ENCODE measurements at regions of chr3 and their contacts with region 1.

Region 1: GRCh38 chr3:98573181-98573728 is 20.2 kb downstream of the CPOX start:
- DNase-seq: peak in 4 of 5 donors; percentile 41 to 55 (median 50)
- H3K4me3 ChIP-seq: no peak overlapping the region
- H3K4me3 Mint-ChIP-seq: peak overlapping the region in 7 of 8 donors; percentile 7 to 70 (median 59)
- H3K27ac ChIP-seq: no peak overlapping the region
- H3K27ac Mint-ChIP-seq: peak overlapping the region; percentile 11 to 96 (median 88)
- H3K4me1 ChIP-seq: peaks cover 21% of the 10 kb centered on the region
- H3K4me1 Mint-ChIP-seq: peaks cover 22 to 47% (median 37%) of the 10 kb centered on the region in 4 donors
- H3K27me3 ChIP-seq: no peaks in the 10 kb centered on the region
- H3K27me3 Mint-ChIP-seq: no peaks in the 10 kb centered on the region

Region 2: DNA sequence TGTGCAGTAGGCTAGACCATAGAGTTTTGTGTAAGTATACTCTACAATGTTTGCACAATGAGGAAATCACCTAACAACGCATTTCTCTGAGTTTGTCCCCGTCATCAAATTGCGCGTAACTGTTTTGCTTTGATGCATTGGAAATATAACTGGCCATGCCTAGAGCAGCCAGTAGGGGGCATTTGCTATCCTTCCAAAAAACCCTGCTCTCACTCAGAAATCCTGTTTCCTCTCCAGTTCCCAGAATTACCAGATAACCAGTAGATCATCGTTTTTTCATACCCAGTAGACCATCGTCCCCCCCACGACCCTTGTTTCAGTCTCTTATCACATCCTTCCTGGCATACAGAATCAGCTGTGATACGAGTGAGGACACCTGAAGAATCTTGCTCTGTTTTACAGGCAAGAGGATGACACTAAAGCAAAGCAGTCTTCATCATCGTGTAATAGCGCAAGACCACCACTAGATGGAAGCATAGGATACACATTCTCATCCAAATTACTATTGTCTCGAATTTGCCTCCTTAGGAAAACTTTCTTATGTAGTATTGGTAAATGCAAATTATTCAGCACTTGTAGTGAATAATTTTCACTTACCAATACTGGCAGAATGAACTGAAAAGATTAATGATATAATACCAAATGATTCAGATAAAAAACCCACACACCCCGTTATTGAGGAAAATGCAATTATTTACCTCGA is 533.8 kb before region 1 on chr3:
- CTCF ChIA-PET with region 1: interaction called, 19 read pairs
- POLR2A ChIA-PET with region 1: no interaction called
- intact Hi-C with region 1: loop called (anchors 1 kb)
- DNase-seq: peak; percentile 84 to 90 (median 89)
- H3K4me3 ChIP-seq: peak overlapping the region; percentile 57 to 58
- H3K4me3 Mint-ChIP-seq: peak overlapping the region; percentile 85 to 96 (median 88)
- H3K27ac ChIP-seq: peak overlapping the region; percentile 68
- H3K27ac Mint-ChIP-seq: peak overlapping the region; percentile 82 to 98 (median 96)
- H3K4me1 ChIP-seq: no peaks in the 10 kb centered on the region
- H3K4me1 Mint-ChIP-seq: peaks cover 2 to 8% (median 5%) of the 10 kb centered on the region in 4 donors
- H3K27me3 ChIP-seq: peaks cover 3% of the 10 kb centered on the region
- H3K27me3 Mint-ChIP-seq: peaks cover 7 to 10% of the 10 kb centered on the region in 2 donors

Region 3: DNA sequence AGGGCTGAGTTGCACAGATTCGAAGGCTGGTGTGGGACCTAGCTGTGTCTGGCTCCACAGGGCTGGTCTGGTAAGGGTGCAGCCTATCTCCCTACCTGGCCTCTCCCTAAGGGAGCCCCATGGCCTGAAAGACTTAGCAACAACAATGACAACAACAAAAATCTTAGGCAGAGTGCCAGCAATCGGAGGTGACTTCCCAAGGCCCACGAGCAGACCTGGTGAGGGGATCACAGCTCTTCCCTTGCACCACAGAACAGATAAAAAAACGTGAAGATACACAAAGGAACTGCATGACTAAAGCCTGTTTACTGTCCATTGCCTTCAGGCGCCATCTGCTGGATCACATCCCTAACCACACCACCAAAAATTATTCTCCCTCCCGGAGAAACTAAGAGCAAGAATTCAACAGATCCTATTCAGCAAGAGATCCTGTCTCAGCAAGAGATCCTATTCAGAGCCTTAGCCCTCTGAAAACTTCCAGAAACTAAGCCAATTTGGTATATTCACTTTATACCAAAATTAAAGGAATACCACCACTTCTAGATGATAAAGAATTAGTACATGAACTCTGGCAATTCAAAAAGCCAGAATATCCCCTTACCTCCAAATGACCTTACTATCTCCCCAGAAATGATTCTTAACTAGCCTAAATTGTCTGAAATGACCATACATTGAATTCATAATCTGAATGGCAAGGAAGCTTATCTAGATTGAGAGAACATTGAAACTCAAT is 243.7 kb before region 1 on chr3:
- CTCF ChIA-PET with region 1: interaction called, 3 read pairs
- POLR2A ChIA-PET with region 1: no interaction called
- intact Hi-C with region 1: loop called (anchors 1 kb)
- DNase-seq: peak; percentile 38 to 56 (median 51)
- H3K4me3 ChIP-seq: no peak overlapping the region
- H3K4me3 Mint-ChIP-seq: peak overlapping the region in 1 of 8 donors; percentile 0
- H3K27ac ChIP-seq: no peak overlapping the region
- H3K27ac Mint-ChIP-seq: peak overlapping the region in 1 of 7 donors; percentile 6
- H3K4me1 ChIP-seq: no peaks in the 10 kb centered on the region
- H3K4me1 Mint-ChIP-seq: peaks cover 0 to 4% (median 2%) of the 10 kb centered on the region in 4 donors
- H3K27me3 ChIP-seq: no peaks in the 10 kb centered on the region
- H3K27me3 Mint-ChIP-seq: peaks cover 12 to 13% of the 10 kb centered on the region in 2 donors

Region 4: DNA sequence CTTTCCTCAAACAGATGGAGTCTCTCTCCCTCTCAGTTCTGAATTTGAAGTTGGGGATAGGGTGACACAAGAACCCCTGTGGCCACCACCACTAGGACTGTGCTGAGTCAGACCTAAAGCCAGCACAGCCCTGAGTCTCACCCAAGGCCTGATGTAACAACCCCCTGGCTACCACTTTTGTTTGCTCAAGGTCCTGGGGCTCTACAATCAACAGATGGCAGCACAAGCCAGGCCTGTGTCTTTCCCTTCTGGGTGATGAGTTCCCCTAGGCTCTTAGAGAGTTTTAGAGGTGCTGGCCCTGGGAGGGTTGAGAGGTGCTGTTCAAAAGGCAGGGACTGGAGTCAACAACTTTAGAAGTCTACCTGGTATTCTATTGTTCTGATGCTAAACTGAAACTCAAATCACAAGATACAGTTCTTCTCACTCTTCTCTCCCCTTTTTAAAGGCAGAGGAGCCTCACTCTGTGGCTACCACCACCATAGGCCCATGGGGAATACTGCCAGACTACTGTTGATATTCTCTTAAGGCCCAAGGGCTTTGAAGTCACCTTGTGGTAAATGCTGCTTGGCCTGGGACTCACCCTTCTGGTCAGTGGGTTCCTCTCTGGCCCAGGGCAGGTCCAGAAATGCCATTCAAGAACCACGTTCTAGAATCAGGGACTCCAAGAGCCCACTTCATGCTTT is 213.1 kb before region 1 on chr3:
- CTCF ChIA-PET with region 1: interaction called, 5 read pairs
- POLR2A ChIA-PET with region 1: no interaction called
- intact Hi-C with region 1: loop called (anchors 1 kb)
- DNase-seq: no peak
- H3K4me3 ChIP-seq: no peak overlapping the region
- H3K4me3 Mint-ChIP-seq: peak overlapping the region in 1 of 8 donors; percentile 38
- H3K27ac ChIP-seq: no peak overlapping the region
- H3K27ac Mint-ChIP-seq: peak overlapping the region in 1 of 7 donors; percentile 47
- H3K4me1 ChIP-seq: no peaks in the 10 kb centered on the region
- H3K4me1 Mint-ChIP-seq: no peaks in the 10 kb centered on the region
- H3K27me3 ChIP-seq: no peaks in the 10 kb centered on the region
- H3K27me3 Mint-ChIP-seq: no peaks in the 10 kb centered on the region

Region 5: GRCh38 chr3:98531622-98532274 is 41.5 kb before region 1 on chr3 and contains the start of gene GPR15:
- CTCF ChIA-PET with region 1: interaction called, 12 read pairs
- POLR2A ChIA-PET with region 1: interaction called, 680 read pairs
- intact Hi-C with region 1: no loop called
- DNase-seq: peak in 1 of 5 donors; percentile 58
- H3K4me3 ChIP-seq: peak within 1 kb of the TSS in 1 of 2 donors; percentile 3
- H3K4me3 Mint-ChIP-seq: peak within 1 kb of the TSS; percentile 44 to 89 (median 68)
- H3K27ac ChIP-seq: peak within 1 kb of the TSS; percentile 9
- H3K27ac Mint-ChIP-seq: peak within 1 kb of the TSS in 6 of 7 donors; percentile 24 to 81 (median 46)
- H3K4me1 ChIP-seq: no peaks in the 10 kb centered on the region
- H3K4me1 Mint-ChIP-seq: peaks cover 10 to 19% (median 16%) of the 10 kb centered on the region in 4 donors
- H3K27me3 ChIP-seq: no peaks in the 10 kb centered on the region
- H3K27me3 Mint-ChIP-seq: no peaks in the 10 kb centered on the region
- total RNA-seq, gene GPR15: 31.2 to 32.0 TPM

Region 6: DNA sequence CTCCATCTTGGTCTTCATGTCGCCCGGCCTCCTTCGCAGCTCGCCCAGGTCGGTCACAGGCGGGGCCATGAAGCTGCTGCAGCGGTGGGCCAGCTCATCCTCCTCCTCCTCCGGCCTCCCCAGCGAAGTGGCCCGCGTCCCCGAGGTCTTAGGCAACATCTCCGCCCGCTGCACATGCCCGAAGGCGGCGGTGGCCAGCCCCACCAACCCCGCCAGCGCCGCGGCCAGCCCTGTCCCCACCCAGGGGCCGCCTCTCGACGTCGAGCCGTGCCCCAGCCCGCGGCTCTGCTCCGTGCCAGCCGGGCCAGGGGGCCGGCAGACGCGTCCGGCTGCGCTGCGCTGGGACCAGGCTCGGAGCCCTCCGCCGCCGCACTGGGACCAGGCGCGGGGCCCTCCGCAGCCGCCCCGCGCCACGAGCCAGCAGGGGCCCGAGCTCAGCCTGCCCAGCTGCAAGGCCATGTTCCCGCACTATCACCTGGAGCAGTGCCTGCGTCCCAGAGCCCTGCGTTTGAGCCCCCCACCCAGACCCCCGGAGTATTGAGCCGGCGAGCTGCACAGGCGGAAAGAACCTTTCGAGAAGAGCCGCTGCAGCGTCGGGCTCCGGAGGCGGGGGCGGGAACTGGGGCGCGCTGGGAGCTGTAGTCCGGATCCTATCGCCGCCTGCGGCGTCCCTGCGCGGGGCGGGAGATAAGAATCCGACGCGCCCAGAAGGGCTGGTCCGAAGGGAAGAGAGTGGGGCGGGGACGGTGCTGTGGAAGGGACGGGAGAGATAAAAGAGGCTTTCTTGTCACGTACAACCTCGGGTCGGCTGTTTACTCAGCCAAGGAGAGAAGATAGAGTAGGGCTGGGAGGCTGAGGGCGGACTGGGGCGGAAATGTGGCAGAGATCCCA is 20.0 kb after region 1 on chr3 and contains the start of gene CPOX:
- CTCF ChIA-PET with region 1: interaction called, 19 read pairs
- POLR2A ChIA-PET with region 1: interaction called, 9 read pairs
- intact Hi-C with region 1: no loop called
- DNase-seq: peak; percentile 74 to 87 (median 79)
- H3K4me3 ChIP-seq: peak within 1 kb of the TSS; percentile 43 to 92
- H3K4me3 Mint-ChIP-seq: peak within 1 kb of the TSS; percentile 93 to 100 (median 98)
- H3K27ac ChIP-seq: peak within 1 kb of the TSS; percentile 71
- H3K27ac Mint-ChIP-seq: peak within 1 kb of the TSS; percentile 74 to 99 (median 98)
- H3K4me1 ChIP-seq: peaks cover 32% of the 10 kb centered on the region
- H3K4me1 Mint-ChIP-seq: peaks cover 28 to 46% (median 37%) of the 10 kb centered on the region in 4 donors
- H3K27me3 ChIP-seq: no peaks in the 10 kb centered on the region
- H3K27me3 Mint-ChIP-seq: no peaks in the 10 kb centered on the region
- total RNA-seq, gene CPOX: 41.1 to 41.3 TPM